Activated naive CD4-positive, alpha-beta T cell treated with anti-CD3 and anti-CD28 coated beads for 36 hours (primary cell): ENCODE measurements at regions of chr7 and their contacts with region 1.

Region 1: GRCh38 chr7:7968543-7969305 is at the start of gene GLCCI1:
- DNase-seq: peak; percentile 98
- H3K4me3 Mint-ChIP-seq: peak within 1 kb of the TSS; percentile 90
- H3K27ac Mint-ChIP-seq: peak within 1 kb of the TSS; percentile 92
- H3K4me1 Mint-ChIP-seq: peaks cover 29% of the 10 kb centered on the region
- H3K27me3 Mint-ChIP-seq: no peaks in the 10 kb centered on the region
- total RNA-seq, gene GLCCI1: 12.9 to 13.3 TPM

Region 2: GRCh38 chr7:6221340-6222319 is 1747.1 kb before region 1 on chr7:
- CTCF ChIA-PET with region 1: no interaction called
- intact Hi-C with region 1: loop called (anchors 5 kb)
- DNase-seq: peak; percentile 57
- H3K4me3 Mint-ChIP-seq: peak overlapping the region; percentile 3
- H3K27ac Mint-ChIP-seq: peak overlapping the region; percentile 55
- H3K4me1 Mint-ChIP-seq: peaks cover 17% of the 10 kb centered on the region
- H3K27me3 Mint-ChIP-seq: no peaks in the 10 kb centered on the region

Region 3: GRCh38 chr7:7556847-7557246 is 411.9 kb before region 1 on chr7:
- CTCF ChIA-PET with region 1: no interaction called
- intact Hi-C with region 1: no loop called
- DNase-seq: no peak
- H3K4me3 Mint-ChIP-seq: no peak overlapping the region
- H3K27ac Mint-ChIP-seq: no peak overlapping the region
- H3K4me1 Mint-ChIP-seq: no peaks in the 10 kb centered on the region
- H3K27me3 Mint-ChIP-seq: peaks cover 3% of the 10 kb centered on the region

Region 4: DNA sequence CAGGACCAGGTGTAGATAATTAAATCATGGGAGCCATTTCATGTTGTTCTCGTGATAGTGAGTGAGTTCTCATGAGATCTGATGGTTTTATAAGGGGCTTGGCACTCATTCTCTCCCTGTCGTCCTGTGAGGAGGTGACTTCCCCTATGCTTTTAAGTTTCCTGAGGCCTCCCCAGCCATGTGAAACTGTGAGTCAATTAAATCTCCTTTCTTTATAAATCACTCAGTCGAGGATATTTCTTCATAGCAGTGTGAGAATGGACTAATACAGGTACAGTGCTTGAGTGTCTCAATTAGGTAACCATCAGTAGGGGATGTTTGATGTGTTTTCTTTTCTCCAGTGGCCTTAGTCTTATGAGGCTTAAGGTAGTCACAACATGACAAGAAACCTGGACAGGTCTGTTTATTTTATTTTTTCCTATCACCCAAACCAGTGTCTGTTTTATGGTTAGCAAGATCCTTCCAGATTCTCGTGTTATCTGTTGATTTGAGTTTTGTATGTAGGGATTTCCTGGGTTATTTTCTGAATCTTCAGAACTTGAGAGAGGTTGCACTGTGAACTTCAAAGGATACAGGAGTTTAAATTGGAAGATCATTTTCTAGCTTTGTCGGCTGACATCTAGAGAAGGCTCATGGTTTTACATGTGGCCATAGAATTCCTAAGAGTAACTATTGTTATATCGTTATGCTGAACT is 296.0 kb before region 1 on chr7:
- CTCF ChIA-PET with region 1: no interaction called
- intact Hi-C with region 1: loop called (anchors 1 kb)
- DNase-seq: peak; percentile 64
- H3K4me3 Mint-ChIP-seq: peak overlapping the region; percentile 31
- H3K27ac Mint-ChIP-seq: peak overlapping the region; percentile 79
- H3K4me1 Mint-ChIP-seq: peaks cover 45% of the 10 kb centered on the region
- H3K27me3 Mint-ChIP-seq: no peaks in the 10 kb centered on the region

Region 5: DNA sequence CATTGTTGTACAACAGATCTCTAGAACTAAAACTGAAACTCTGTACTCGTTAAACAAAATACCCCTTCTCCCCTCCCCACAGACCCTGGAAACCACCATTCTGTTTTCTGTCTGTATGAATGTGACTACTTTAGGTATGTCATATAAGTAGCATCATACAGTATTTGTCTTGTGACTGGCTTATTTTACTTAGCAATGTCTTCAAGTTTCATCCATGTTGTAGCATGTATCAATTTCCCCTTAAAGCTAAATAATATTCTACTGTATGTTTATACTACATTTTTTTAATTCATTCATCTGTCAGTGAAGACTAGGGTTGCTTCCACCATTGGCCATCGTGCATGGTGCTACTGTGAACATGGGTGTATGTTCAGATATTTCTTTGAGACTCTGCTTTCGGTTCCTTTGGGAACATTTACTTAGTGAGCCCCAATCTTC is 179.2 kb before region 1 on chr7:
- CTCF ChIA-PET with region 1: no interaction called
- intact Hi-C with region 1: loop called (anchors 1 kb)
- DNase-seq: no peak
- H3K4me3 Mint-ChIP-seq: no peak overlapping the region
- H3K27ac Mint-ChIP-seq: no peak overlapping the region
- H3K4me1 Mint-ChIP-seq: peaks cover 5% of the 10 kb centered on the region
- H3K27me3 Mint-ChIP-seq: no peaks in the 10 kb centered on the region

Region 6: GRCh38 chr7:7978860-7979259 is 10.1 kb after region 1 on chr7:
- CTCF ChIA-PET with region 1: interaction called, 3 read pairs
- intact Hi-C with region 1: loop called (anchors 1 kb)
- DNase-seq: no peak
- H3K4me3 Mint-ChIP-seq: no peak overlapping the region
- H3K27ac Mint-ChIP-seq: no peak overlapping the region
- H3K4me1 Mint-ChIP-seq: peaks cover 57% of the 10 kb centered on the region
- H3K27me3 Mint-ChIP-seq: no peaks in the 10 kb centered on the region

Region 7: GRCh38 chr7:8042796-8043535 is 74.2 kb after region 1 on chr7:
- CTCF ChIA-PET with region 1: interaction called, 4 read pairs
- intact Hi-C with region 1: loop called (anchors 2 kb)
- DNase-seq: no peak
- H3K4me3 Mint-ChIP-seq: no peak overlapping the region
- H3K27ac Mint-ChIP-seq: peak overlapping the region; percentile 82
- H3K4me1 Mint-ChIP-seq: peaks cover 72% of the 10 kb centered on the region
- H3K27me3 Mint-ChIP-seq: no peaks in the 10 kb centered on the region

Region 8: GRCh38 chr7:8190119-8190895 is 221.6 kb after region 1 on chr7:
- CTCF ChIA-PET with region 1: interaction called, 11 read pairs
- intact Hi-C with region 1: loop called (anchors 1 kb)
- DNase-seq: peak; percentile 84
- H3K4me3 Mint-ChIP-seq: no peak overlapping the region
- H3K27ac Mint-ChIP-seq: no peak overlapping the region
- H3K4me1 Mint-ChIP-seq: peaks cover 10% of the 10 kb centered on the region
- H3K27me3 Mint-ChIP-seq: no peaks in the 10 kb centered on the region

Region 9: DNA sequence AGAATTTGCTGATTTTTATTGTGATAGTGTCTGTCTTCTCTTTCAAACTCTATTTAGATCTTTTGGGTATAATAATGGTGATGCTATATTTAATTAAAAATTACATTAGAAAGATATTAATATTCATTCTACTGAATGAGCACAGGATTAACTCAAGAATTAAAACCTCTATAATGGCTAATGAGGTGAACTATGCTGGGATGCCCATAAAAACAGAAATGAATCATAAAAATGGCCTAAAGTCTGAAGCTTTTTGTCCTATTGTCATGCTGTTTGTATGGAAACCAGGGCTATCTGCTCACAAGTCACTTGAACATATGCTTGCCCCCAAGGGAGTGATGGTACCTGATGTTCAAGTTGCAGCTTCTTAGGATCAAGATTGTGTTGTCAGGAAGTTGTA is 369.5 kb after region 1 on chr7:
- CTCF ChIA-PET with region 1: no interaction called
- intact Hi-C with region 1: no loop called
- DNase-seq: no peak
- H3K4me3 Mint-ChIP-seq: no peak overlapping the region
- H3K27ac Mint-ChIP-seq: no peak overlapping the region
- H3K4me1 Mint-ChIP-seq: no peaks in the 10 kb centered on the region
- H3K27me3 Mint-ChIP-seq: peaks cover 3% of the 10 kb centered on the region